Dorsolateral prefrontal cortex (tissue), 120 donors: ENCODE measurements at regions of chr14 and their contacts with region 1.

Region 1: GRCh38 chr14:75307700-75308379 is 29.2 kb downstream of the FOS start:
- DNase-seq: peak; percentile 71 to 89 (median 84)
- H3K4me3 ChIP-seq: no peak overlapping the region
- H3K27ac ChIP-seq: peak overlapping the region in 4 of 59 donors; percentile 13 to 55 (median 32)
- H3K27me3 ChIP-seq: no peaks in the 10 kb centered on the region
- CTCF ChIP-seq: peak; percentile 82 to 99 (median 97)

Region 2: GRCh38 chr14:74595006-74595735 is 712.7 kb before region 1 on chr14:
- intact Hi-C with region 1: no loop called
- DNase-seq: peak in 1 of 10 donors; percentile 15
- H3K4me3 ChIP-seq: no peak overlapping the region
- H3K27ac ChIP-seq: peak overlapping the region in 7 of 59 donors; percentile 24 to 69 (median 38)
- H3K27me3 ChIP-seq: no peaks in the 10 kb centered on the region
- CTCF ChIP-seq: no peak

Region 3: GRCh38 chr14:74860906-74861733 is 446.7 kb before region 1 on chr14:
- intact Hi-C with region 1: loop called in 1 of 2 experiments (anchors 5 kb)
- DNase-seq: peak; percentile 80 to 96 (median 88)
- H3K4me3 ChIP-seq: no peak overlapping the region
- H3K27ac ChIP-seq: no peak overlapping the region
- H3K27me3 ChIP-seq: no peaks in the 10 kb centered on the region
- CTCF ChIP-seq: peak; percentile 66 to 95 (median 88)

Region 4: GRCh38 chr14:75126679-75127473 is 181.0 kb before region 1 on chr14 and contains the start of gene NEK9:
- intact Hi-C with region 1: loop called in 1 of 2 experiments (anchors 2 kb)
- DNase-seq: peak; percentile 89 to 96 (median 94)
- H3K4me3 ChIP-seq: peak within 1 kb of the TSS; percentile 53 to 98 (median 90)
- H3K27ac ChIP-seq: peak within 1 kb of the TSS; percentile 45 to 98 (median 92)
- H3K27me3 ChIP-seq: no peaks in the 10 kb centered on the region
- CTCF ChIP-seq: peak in 24 of 56 donors; percentile 11 to 59 (median 28)
- total RNA-seq, gene NEK9: 54.3 to 112 (median 74.8) TPM

Region 5: GRCh38 chr14:75383721-75384120 is 75.9 kb after region 1 on chr14:
- intact Hi-C with region 1: no loop called
- DNase-seq: no peak
- H3K4me3 ChIP-seq: no peak overlapping the region
- H3K27ac ChIP-seq: peak overlapping the region in 2 of 59 donors; percentile 36 to 45
- H3K27me3 ChIP-seq: no peaks in the 10 kb centered on the region
- CTCF ChIP-seq: no peak

Region 6: DNA sequence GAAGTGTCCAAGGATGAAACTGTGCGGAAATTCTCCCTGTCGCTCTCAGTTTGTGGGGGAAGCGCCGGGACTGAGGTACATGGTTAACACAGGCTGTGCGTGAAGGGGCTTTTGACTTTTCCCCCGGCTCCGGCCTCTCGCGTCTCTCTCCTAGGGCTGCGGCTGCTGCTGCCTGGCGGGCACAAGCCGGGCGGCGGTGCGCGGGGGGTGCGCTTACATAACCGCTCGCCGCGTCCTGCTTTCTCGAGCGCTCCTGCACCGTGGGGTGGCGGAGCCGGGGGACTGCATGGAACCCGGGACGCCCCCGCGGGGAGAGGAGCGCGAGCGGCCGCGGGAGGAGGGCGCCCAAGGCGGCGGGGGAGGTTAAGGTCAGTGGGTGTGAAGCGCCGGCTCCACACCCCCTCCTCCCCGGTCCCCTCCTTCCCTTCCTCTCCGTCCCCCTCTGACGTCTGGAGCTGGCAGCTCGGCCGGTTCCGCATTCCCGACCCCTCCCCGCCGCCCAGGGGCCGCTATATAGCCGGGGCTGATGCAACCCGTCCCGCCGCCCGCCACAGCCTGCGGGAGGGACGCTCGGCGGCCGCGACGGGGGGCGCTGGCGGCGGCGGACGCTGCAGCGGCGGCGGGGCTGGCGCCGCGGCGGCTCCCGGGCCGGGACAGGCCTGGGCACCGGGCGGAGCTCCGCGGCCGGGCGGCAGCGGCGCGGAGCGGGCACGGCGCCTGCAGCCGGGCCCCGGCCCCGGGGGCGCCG is 119.8 kb after region 1 on chr14 and contains the start of gene JDP2:
- intact Hi-C with region 1: loop called (anchors 2 to 5 kb)
- DNase-seq: peak; percentile 65 to 85 (median 82)
- H3K4me3 ChIP-seq: peak within 1 kb of the TSS; percentile 57 to 84 (median 74)
- H3K27ac ChIP-seq: peak within 1 kb of the TSS; percentile 39 to 99 (median 94)
- H3K27me3 ChIP-seq: no peaks in the 10 kb centered on the region
- CTCF ChIP-seq: peak in 31 of 56 donors; percentile 7 to 39 (median 20)
- total RNA-seq, gene JDP2: 21.8 to 96.2 (median 36.8) TPM

Region 7: GRCh38 chr14:75654127-75654732 is 346.4 kb after region 1 on chr14:
- intact Hi-C with region 1: loop called in 1 of 2 experiments (anchors 10 kb)
- DNase-seq: peak; percentile 73 to 89 (median 81)
- H3K4me3 ChIP-seq: no peak overlapping the region
- H3K27ac ChIP-seq: no peak overlapping the region
- H3K27me3 ChIP-seq: no peaks in the 10 kb centered on the region
- CTCF ChIP-seq: peak; percentile 83 to 99 (median 97)